HepG2 (cell line): ENCODE measurements at regions of chr12 and their contacts with region 1.

Region 1: GRCh38 chr12:95998611-95999286 is 2.6 kb upstream of the HAL start:
- DNase-seq: peak; percentile 65
- ATAC-seq: peak; percentile 86
- H3K4me3 ChIP-seq: no peak overlapping the region
- H3K27ac ChIP-seq: no peak overlapping the region
- H3K4me1 ChIP-seq: peaks cover 54% of the 10 kb centered on the region
- H3K27me3 ChIP-seq: no peaks in the 10 kb centered on the region
- CTCF ChIP-seq: peak; percentile 90
- EP300 ChIP-seq: no peak
- POLR2A ChIP-seq: no peak
- RAD21 ChIP-seq: peak; percentile 81

Region 2: DNA sequence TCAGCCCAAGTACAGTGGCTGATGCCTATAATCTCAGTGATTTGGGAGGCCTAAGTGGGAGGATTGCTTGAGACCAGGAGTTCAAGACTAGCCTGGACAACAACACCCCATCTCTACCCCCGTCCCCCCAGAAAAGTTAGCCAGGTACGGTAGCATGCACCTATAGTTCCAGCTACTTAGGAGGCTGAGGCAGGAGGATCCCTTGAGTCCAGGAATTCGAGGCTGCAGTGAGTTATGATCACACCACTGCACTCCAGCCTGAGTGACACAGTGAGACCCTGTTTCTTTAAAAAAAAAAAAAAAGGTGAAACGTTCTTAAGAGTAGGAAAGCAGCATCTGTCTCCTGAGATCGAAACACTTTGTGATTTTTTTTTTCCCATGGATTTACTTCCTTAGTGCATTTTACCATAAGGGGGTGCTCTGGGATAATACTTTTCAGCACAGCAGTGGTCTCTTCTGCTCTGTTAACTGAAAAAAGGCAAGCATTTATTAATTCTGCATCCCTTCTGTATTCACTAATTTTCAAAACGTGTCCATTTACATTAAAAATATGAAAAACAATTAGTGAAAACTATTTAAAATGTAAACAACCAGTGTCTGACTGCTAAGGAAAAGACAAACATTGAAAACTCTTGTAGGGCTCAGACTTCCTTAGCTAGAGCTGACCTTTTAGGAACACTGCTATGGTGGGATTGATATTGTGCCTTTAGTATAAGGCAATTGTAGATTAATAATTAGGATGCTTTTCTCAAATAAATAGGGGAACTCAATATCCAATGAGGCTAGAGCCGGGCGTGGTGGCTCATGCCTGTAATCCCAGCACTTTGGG is 416.3 kb before region 1 on chr12:
- CTCF ChIA-PET with region 1: no interaction called
- POLR2A ChIA-PET with region 1: no interaction called
- in situ Hi-C with region 1: loop called (anchors 25 kb)
- intact Hi-C with region 1: loop called (anchors 1 kb)
- DNase-seq: peak; percentile 37
- ATAC-seq: peak; percentile 67
- H3K4me3 ChIP-seq: no peak overlapping the region
- H3K27ac ChIP-seq: no peak overlapping the region
- H3K4me1 ChIP-seq: no peaks in the 10 kb centered on the region
- H3K27me3 ChIP-seq: no peaks in the 10 kb centered on the region
- CTCF ChIP-seq: peak; percentile 67
- EP300 ChIP-seq: no peak
- POLR2A ChIP-seq: no peak
- RAD21 ChIP-seq: peak; percentile 45; the same call in 1 of the 2 replicates

Region 3: GRCh38 chr12:95858479-95859343 is 140.0 kb before region 1 on chr12 and contains the start of gene SNRPF:
- CTCF ChIA-PET with region 1: no interaction called
- POLR2A ChIA-PET with region 1: interaction called, 5 read pairs
- in situ Hi-C with region 1: no loop called
- intact Hi-C with region 1: loop called (anchors 5 kb)
- DNase-seq: peak; percentile 95
- ATAC-seq: peak; percentile 98
- H3K4me3 ChIP-seq: peak within 1 kb of the TSS; percentile 84 to 87 (median 85)
- H3K27ac ChIP-seq: peak within 1 kb of the TSS; percentile 84
- H3K4me1 ChIP-seq: peaks cover 64% of the 10 kb centered on the region
- H3K27me3 ChIP-seq: no peaks in the 10 kb centered on the region; a peak in 2 of 5 replicates
- CTCF ChIP-seq: peak; percentile 34; the same call in 1 of the 2 replicates
- EP300 ChIP-seq: no peak
- POLR2A ChIP-seq: peak; percentile 76 to 83; a peak in 3 of 4 replicates
- RAD21 ChIP-seq: peak; percentile 29
- total RNA-seq, gene SNRPF: 77.2 and 94.7 TPM in 2 replicates

Region 4: GRCh38 chr12:95942524-95943329 is 56.0 kb before region 1 on chr12 and contains the start of gene CCDC38:
- CTCF ChIA-PET with region 1: no interaction called
- POLR2A ChIA-PET with region 1: interaction called, 43 read pairs
- in situ Hi-C with region 1: no loop called
- intact Hi-C with region 1: loop called (anchors 2 kb)
- DNase-seq: peak; percentile 88
- ATAC-seq: peak; percentile 90
- H3K4me3 ChIP-seq: peak within 1 kb of the TSS; percentile 72 to 92 (median 86)
- H3K27ac ChIP-seq: peak within 1 kb of the TSS; percentile 88
- H3K4me1 ChIP-seq: peaks cover 53% of the 10 kb centered on the region
- H3K27me3 ChIP-seq: no peaks in the 10 kb centered on the region; a peak in 1 of 5 replicates
- CTCF ChIP-seq: no peak
- EP300 ChIP-seq: peak in 1 of 2 experiments; percentile 61; a peak in 3 of 4 replicates
- POLR2A ChIP-seq: peak; percentile 57 to 62
- RAD21 ChIP-seq: no peak
- total RNA-seq, gene CCDC38: 0.18 and 0.24 TPM in 2 replicates

Region 5: GRCh38 chr12:95966287-95966870 is 32.4 kb before region 1 on chr12:
- CTCF ChIA-PET with region 1: interaction called, 3 read pairs
- POLR2A ChIA-PET with region 1: interaction called, 24 read pairs
- in situ Hi-C with region 1: no loop called
- intact Hi-C with region 1: no loop called
- DNase-seq: peak; percentile 87
- ATAC-seq: peak; percentile 96
- H3K4me3 ChIP-seq: peak overlapping the region in 2 of 3 experiments; percentile 32 to 38; a peak in 3 of 6 replicates
- H3K27ac ChIP-seq: peak overlapping the region; percentile 85
- H3K4me1 ChIP-seq: peaks cover 47% of the 10 kb centered on the region
- H3K27me3 ChIP-seq: no peaks in the 10 kb centered on the region
- CTCF ChIP-seq: no peak
- EP300 ChIP-seq: peak in 1 of 2 experiments; percentile 83; a peak in 2 of 4 replicates
- POLR2A ChIP-seq: peak; percentile 39 to 41; a peak in 1 of 4 replicates
- RAD21 ChIP-seq: 0 out of 2 replicates have a peak, but pooled peaks have one; percentile 26